Right ventricle myocardium inferior (tissue), 1 donor: ENCODE measurements at regions of chr14 and their contacts with region 1.

Region 1: GRCh38 chr14:103576371-103577024 is 13.7 kb downstream of the COA8 start:
- DNase-seq: peak; percentile 91
- ATAC-seq: peak; percentile 96

Region 2: DNA sequence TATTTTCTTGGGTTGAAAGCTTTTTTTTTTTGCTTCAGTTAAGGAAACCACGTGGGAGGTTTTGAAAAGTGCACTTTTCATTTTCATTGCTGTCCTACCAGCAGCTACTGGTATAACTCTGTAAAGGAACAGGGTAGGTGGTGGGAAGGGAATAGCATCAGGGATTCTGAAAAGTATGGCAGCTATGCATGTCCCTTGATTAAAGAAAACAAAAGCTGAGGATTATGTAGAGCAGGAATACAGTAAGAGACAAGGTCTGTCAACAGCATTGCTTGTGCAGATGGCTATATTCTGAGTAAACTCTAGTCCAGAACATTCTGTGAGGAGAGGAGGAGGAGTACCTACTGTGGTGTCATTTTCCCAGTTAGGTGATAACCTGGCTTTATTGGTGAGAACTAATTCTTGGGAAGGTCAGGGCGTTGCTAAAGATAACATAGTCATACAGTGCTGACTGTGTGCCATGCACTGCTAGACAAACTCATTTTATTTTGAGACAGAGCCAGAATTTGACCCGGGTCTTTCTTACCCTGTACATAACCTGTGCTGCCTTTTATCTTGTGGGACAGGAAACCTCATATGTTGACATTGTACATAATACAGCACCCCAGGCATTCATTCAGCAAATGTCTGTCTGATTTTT is 879.5 kb before region 1 on chr14:
- intact Hi-C with region 1: no loop called
- DNase-seq: no peak
- ATAC-seq: peak; percentile 34

Region 3: DNA sequence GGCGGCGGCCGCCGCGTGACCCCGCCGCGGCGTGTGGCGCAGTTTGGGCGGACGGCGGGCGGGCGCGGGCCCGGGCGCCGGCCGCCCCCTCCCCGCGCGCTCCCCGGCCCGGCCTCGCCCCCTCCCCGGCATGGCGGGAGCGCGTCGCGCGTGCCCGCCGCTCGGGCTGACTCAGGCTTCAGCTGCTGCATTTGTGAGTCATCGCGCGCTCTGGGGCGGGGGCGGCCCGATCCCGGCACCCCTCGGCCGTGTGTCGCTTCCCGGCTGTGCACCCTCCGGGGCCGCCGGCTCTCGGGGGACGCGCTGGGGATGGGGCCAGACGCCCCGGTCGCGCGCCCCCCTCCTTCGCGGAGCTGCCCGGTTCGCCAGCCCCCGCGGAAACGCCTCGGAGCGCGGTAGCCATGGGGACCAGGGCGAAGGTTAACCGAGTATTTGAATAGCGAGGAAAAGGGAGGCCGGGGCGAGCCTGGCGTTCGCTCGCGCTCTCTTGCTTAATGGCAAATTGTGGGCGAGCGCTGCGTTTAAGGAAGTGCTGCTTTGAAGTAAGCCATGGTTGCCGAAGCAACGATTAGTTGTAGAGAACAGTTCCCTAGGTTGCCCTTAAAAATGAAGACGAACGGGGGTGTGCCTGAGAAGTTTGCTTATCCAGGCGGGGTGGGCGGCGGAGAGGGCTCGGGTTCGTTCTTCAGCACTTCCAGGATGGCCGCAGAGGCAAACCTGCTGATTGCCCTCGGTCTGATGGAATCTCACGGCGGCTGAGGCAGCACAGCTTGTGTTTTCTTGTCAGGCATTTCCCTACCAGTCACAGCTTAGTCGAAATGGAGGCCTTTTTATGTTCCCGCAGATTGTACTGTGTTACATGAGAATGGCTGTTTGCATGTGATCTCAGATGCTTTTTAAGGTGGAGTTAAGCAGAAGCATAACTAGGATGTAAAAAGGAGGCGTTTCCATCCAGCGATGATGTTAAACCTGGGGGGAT is 241.6 kb before region 1 on chr14:
- intact Hi-C with region 1: no loop called
- DNase-seq: peak; percentile 80
- ATAC-seq: peak; percentile 8

Region 4: DNA sequence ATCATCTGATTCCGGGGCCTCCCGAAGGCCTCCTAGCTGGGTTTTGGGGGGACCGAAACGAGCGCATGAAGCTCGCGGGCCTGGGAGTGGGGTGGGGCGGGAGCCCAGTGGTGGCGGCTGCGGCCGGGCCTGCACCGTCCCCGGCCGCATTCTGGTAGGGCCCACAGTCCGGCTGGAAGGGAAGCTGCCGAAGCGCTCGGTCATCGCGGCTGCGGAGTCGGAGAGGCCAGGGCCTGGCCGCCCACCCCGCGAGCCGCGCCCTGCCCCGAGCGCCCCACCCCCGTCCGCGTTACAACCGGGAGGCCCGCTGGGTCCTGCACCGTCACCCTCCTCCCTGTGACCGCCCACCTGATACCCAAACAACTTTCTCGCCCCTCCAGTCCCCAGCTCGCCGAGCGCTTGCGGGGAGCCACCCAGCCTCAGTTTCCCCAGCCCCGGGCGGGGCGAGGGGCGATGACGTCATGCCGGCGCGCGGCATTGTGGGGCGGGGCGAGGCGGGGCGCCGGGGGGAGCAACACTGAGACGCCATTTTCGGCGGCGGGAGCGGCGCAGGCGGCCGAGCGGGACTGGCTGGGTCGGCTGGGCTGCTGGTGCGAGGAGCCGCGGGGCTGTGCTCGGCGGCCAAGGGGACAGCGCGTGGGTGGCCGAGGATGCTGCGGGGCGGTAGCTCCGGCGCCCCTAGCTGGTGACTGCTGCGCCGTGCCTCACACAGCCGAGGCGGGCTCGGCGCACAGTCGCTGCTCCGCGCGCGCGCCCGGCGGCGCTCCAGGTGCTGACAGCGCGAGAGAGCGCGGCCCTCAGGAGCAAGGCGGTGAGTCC is 52.4 kb after region 1 on chr14 and contains the start of gene KLC1:
- intact Hi-C with region 1: loop called (anchors 5 kb)
- DNase-seq: peak; percentile 93
- ATAC-seq: peak; percentile 91
- total RNA-seq, gene KLC1: 151 TPM

Region 5: DNA sequence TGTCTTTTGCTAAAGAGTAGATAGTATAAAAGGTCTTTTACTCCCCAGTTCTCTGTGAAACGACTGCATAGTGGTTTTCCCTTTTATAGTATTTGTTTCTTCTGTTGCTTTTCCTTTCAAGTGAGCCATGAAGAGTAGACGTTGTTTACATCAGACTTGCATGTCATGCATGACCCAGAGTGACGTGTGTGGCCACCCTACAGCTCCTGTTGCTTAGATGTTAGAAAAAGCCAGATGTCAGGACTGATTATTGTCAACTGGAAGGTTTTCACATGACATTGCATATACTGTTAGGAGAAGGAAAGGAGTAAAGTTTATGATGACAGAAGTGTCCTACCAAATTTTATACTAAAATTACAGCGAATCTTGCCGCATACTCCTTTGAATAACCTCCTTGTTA is 367.2 kb after region 1 on chr14:
- intact Hi-C with region 1: no loop called
- DNase-seq: no peak
- ATAC-seq: no peak

Region 6: GRCh38 chr14:103984196-103984595 is 407.7 kb after region 1 on chr14:
- intact Hi-C with region 1: loop called (anchors 5 kb)
- DNase-seq: no peak
- ATAC-seq: no peak